BJ (cell line): ENCODE measurements at regions of chr3 and their contacts with region 1.

Region 1: GRCh38 chr3:132549890-132550578 is 47.0 kb upstream of the ACKR4 start:
- DNase-seq: no peak
- H3K4me3 ChIP-seq: no peak overlapping the region
- H3K27me3 ChIP-seq: no peaks in the 10 kb centered on the region
- CTCF ChIP-seq: no peak

Region 2: DNA sequence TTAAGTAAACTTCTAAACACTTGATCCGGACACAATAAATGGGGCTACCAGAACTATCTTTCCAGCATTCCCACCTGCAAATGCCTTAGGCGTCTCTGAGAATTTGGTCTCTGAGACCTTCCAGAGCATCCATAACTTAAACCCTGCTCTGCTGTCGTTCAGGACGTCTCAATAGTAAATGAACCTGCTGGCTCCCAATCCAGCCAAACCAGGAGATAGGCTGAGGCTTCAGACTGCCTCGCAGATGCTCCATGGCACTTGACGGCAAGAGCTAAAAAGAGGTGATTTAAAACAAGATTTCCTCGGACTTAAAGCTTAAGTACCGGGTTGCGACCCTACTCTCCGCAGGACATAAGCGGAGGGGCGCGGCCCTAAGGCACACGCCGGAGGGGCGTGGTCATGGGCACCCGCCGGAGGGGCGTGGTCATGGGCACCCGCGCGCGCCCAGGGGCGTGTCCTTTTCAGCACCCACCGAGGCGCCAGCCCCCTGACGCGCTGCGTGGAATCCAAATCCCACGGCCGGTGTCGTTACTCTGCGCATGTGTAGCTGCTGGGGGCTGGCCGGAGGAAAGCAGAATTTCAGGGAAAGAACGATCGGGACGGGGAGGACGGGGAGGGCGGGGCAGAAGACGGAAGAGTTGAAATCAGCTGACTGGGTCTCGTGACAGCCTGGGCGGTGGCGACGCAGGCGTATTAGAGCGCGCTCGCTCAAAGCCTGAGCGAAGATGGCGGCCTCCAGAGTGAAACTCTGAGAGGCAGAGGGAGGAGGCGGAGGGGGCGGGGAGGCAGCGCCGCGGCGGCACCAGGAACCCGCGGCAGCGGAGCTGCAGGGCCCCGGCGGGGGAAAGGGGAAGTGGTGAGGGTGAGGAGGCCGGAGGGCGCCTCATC is 133.0 kb before region 1 on chr3 and contains the start of gene DNAJC13:
- CTCF ChIA-PET with region 1: no interaction called
- POLR2A ChIA-PET with region 1: interaction called, 12 read pairs
- DNase-seq: peak; percentile 80
- H3K4me3 ChIP-seq: peak within 1 kb of the TSS; percentile 93
- H3K27me3 ChIP-seq: no peaks in the 10 kb centered on the region
- CTCF ChIP-seq: no peak
- polyA plus RNA-seq, gene DNAJC13: 21.7 and 42.7 TPM in 2 replicates